ENCODE measurements at regions of chr15 and their contacts with region 1.

Region 1: GRCh38 chr15:63600616-63601025 is 3.4 kb downstream of the FBXL22 start:
- DNase-seq: peak; percentile 85 to 95 (median 90)
- ATAC-seq: peak; percentile 93
- H3K4me3 ChIP-seq: peak overlapping the region; percentile 95
- H3K4me3 Mint-ChIP-seq: peak overlapping the region; percentile 91 to 99 (median 94)
- H3K27ac ChIP-seq: peak overlapping the region; percentile 80
- H3K27ac Mint-ChIP-seq: peak overlapping the region; percentile 90 to 96 (median 93)
- H3K4me1 ChIP-seq: peaks cover 22 to 27% of the 10 kb centered on the region in 2 donors
- H3K4me1 Mint-ChIP-seq: peaks cover 39 to 70% (median 66%) of the 10 kb centered on the region in 7 donors
- H3K27me3 ChIP-seq: no peaks in the 10 kb centered on the region
- H3K27me3 Mint-ChIP-seq: no peaks in the 10 kb centered on the region

Region 2: DNA sequence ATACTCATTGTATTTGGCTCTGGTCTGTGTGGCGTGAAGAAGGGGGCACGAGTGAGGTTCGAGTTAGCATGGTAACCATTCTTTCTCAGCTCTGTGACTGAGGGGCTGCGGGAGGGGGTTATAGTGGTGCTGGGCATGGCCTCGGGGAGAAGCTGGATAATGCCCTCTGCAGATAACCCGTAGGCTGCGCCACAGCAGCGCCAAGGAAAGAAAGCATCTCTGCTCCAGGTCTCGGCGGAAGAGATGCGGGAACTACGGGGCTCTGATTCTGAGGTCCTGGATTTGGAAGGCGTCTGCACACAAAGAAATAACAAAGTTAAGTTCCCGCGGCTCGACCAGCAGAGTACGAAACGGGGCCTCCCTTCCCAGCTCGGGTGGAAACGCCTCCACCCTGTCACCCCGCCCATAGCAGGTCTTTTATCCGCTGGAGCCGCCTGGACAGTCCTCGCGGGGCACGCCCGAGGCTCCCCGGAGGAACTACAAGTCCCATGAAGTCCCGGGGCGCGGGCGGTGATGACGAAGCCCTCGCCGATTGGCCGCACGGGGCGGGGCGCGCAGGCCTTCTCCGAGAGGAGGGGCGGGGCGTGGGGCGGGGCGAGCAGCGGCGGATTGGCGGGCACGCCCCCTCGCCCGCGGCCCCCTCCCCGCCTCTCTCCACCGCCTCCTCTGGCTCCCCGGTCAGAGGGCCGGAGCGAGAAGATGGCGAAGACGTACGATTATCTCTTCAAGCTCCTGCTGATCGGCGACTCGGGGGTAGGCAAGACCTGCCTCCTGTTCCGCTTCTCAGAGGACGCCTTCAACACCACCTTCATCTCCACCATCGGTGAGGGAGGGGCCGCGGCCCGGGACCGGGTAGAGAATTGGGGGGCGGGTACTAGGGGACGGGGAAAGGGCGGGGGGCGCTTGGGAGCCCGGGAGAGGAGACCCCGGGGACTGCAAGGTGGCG is 411.4 kb before region 1 on chr15 and contains the start of gene RAB8B:
- CTCF ChIA-PET with region 1: no interaction called
- POLR2A ChIA-PET with region 1: no interaction called
- intact Hi-C with region 1: loop called in 1 of 2 experiments (anchors 5 kb)
- DNase-seq: peak; percentile 85 to 98 (median 93)
- ATAC-seq: peak; percentile 88
- H3K4me3 ChIP-seq: peak within 1 kb of the TSS; percentile 86
- H3K4me3 Mint-ChIP-seq: peak within 1 kb of the TSS; percentile 92 to 99 (median 97)
- H3K27ac ChIP-seq: peak within 1 kb of the TSS; percentile 99
- H3K27ac Mint-ChIP-seq: peak within 1 kb of the TSS; percentile 84 to 98 (median 95)
- H3K4me1 ChIP-seq: peaks cover 22 to 40% of the 10 kb centered on the region in 2 donors
- H3K4me1 Mint-ChIP-seq: peaks cover 41 to 54% (median 50%) of the 10 kb centered on the region in 7 donors
- H3K27me3 ChIP-seq: no peaks in the 10 kb centered on the region
- H3K27me3 Mint-ChIP-seq: peaks cover 0 to 3% (median 0%) of the 10 kb centered on the region in 5 donors
- total RNA-seq, gene RAB8B: 37.2 to 100 (median 71.3) TPM

Region 3: DNA sequence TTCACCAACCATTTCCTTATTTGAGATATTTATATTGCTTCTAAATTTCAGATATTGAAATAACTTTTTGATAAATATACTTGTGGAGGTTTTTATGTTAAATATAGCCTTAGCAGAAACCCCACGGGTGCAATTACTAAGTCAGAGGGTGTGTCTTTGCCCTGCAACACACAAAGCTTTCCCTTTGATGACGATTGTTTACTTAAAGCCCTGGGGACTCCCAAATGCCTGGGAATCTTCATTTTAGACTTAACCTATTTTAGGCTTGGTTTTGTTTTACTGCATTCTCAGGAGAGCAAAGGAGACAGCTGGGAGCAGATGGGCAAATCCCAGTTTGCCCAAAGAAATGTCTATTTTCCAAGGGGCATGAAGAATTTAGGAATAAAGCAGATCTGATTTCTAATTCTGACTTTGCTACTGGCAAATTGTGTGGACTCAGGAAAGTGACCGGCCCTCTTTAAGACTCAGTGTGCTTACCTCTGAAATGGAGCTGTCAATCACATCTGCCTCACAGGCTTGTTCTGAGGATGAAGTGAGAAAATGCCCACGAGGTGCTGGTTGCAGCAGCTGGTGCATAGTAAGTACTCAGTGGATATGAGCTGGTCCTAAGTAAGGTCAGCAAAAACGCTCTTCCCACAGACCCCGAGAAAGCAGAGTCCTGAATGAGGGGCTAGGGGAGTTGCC is 169.7 kb before region 1 on chr15:
- CTCF ChIA-PET with region 1: no interaction called
- POLR2A ChIA-PET with region 1: no interaction called
- intact Hi-C with region 1: no loop called
- DNase-seq: no peak
- ATAC-seq: no peak
- H3K4me3 ChIP-seq: no peak overlapping the region
- H3K4me3 Mint-ChIP-seq: no peak overlapping the region
- H3K27ac ChIP-seq: no peak overlapping the region
- H3K27ac Mint-ChIP-seq: no peak overlapping the region
- H3K4me1 ChIP-seq: no peaks in the 10 kb centered on the region
- H3K4me1 Mint-ChIP-seq: peaks cover 0 to 20% (median 11%) of the 10 kb centered on the region in 7 donors
- H3K27me3 ChIP-seq: no peaks in the 10 kb centered on the region
- H3K27me3 Mint-ChIP-seq: no peaks in the 10 kb centered on the region

Region 4: DNA sequence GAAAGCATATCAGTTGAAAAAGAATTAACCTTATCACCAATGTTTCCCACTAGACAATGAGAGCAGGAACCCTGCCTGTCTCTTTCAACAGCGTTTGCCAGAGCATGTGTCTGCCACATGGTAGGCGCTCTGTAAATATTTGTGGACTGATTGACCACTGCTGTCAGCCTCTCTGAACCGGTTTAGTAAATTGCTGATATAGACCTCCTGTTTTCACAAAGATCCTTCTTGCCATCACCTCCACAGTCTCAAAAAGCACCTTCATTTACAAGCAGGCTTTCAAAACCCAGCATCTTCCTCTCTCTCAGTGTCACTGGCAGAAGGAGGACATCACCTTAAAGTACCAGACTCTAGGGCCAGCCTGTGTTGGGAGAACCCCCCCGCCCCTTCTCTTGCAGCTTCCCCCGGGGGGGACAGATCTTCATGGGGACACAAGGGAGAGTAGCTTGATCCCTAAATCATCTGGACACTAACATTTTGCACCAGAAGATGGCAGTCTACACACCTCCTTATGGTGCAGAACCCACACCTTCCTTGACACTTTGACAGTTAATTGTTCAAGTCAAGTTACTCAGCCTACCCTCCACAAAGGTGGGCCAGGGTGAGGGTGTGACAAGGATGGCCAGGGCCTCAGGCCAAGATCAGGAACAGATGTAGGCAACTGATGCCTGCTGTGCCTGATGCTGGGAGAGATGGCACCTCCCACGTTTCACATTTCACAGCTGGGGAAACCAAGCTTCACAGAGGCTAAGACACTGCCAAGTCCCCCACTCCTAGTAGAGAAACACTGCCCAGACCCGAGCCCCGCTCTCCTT is 134.0 kb before region 1 on chr15:
- CTCF ChIA-PET with region 1: interaction called, 40 read pairs
- POLR2A ChIA-PET with region 1: interaction called, 7 read pairs
- intact Hi-C with region 1: loop called (anchors 1 kb)
- DNase-seq: peak in 8 of 9 donors; percentile 46 to 80 (median 74)
- ATAC-seq: peak; percentile 95
- H3K4me3 ChIP-seq: no peak overlapping the region
- H3K4me3 Mint-ChIP-seq: peak overlapping the region in 2 of 10 donors; percentile 5 to 6
- H3K27ac ChIP-seq: no peak overlapping the region
- H3K27ac Mint-ChIP-seq: peak overlapping the region; percentile 37 to 96 (median 82)
- H3K4me1 ChIP-seq: peaks cover 0 to 4% of the 10 kb centered on the region in 2 donors
- H3K4me1 Mint-ChIP-seq: peaks cover 12 to 43% (median 33%) of the 10 kb centered on the region in 7 donors
- H3K27me3 ChIP-seq: no peaks in the 10 kb centered on the region
- H3K27me3 Mint-ChIP-seq: peaks cover 0 to 18% (median 0%) of the 10 kb centered on the region in 5 donors

Region 5: DNA sequence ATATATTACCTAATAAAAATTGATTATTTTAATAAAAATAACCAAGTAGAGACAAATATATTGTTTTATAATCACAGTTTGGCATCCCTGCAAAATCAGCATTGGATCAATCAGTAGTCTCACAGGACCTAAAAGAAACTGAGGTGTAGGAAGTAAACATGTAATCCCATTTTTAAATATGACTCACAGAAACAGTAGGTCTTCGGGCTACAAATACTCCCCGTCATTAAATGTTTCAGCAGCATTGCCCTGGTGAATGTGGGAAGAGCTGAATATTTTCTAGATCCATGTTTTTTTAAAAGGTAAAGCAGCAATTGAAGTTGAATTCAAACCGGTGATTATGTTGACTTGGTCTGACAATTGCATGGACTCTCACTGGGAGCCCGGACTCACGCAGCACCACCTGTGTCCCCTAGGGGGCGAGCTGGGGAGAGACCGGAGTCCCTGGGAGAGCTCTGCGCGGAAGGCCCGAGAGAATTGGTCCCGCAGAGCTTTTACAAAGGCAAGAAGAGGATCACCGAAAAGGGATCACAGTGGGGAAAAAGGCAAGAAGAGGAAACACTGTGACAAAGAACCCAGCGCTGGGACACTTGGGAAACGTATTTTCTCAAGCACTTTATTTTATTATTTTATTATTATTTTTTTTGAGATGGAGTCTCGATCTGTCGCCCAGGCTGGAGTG is 113.4 kb before region 1 on chr15:
- CTCF ChIA-PET with region 1: interaction called, 4 read pairs
- POLR2A ChIA-PET with region 1: interaction called, 6 read pairs
- intact Hi-C with region 1: loop called in 1 of 2 experiments (anchors 5 kb)
- DNase-seq: peak; percentile 68 to 89 (median 83)
- ATAC-seq: peak; percentile 86
- H3K4me3 ChIP-seq: no peak overlapping the region
- H3K4me3 Mint-ChIP-seq: peak overlapping the region; percentile 50 to 84 (median 59)
- H3K27ac ChIP-seq: peak overlapping the region; percentile 10
- H3K27ac Mint-ChIP-seq: peak overlapping the region; percentile 47 to 99 (median 82)
- H3K4me1 ChIP-seq: peaks cover 30 to 55% of the 10 kb centered on the region in 2 donors
- H3K4me1 Mint-ChIP-seq: peaks cover 40 to 88% (median 71%) of the 10 kb centered on the region in 7 donors
- H3K27me3 ChIP-seq: no peaks in the 10 kb centered on the region
- H3K27me3 Mint-ChIP-seq: no peaks in the 10 kb centered on the region

Region 6: GRCh38 chr15:63668601-63669000 is 68.0 kb after region 1 on chr15:
- CTCF ChIA-PET with region 1: no interaction called
- POLR2A ChIA-PET with region 1: interaction called, 4 read pairs
- intact Hi-C with region 1: loop called in 1 of 2 experiments (anchors 1 kb)
- DNase-seq: peak in 6 of 9 donors; percentile 22 to 63 (median 52)
- ATAC-seq: peak; percentile 83
- H3K4me3 ChIP-seq: peak overlapping the region; percentile 36
- H3K4me3 Mint-ChIP-seq: peak overlapping the region; percentile 31 to 82 (median 78)
- H3K27ac ChIP-seq: peak overlapping the region; percentile 52
- H3K27ac Mint-ChIP-seq: peak overlapping the region; percentile 89 to 96 (median 92)
- H3K4me1 ChIP-seq: peaks cover 17 to 25% of the 10 kb centered on the region in 2 donors
- H3K4me1 Mint-ChIP-seq: peaks cover 22 to 56% (median 50%) of the 10 kb centered on the region in 7 donors
- H3K27me3 ChIP-seq: no peaks in the 10 kb centered on the region
- H3K27me3 Mint-ChIP-seq: no peaks in the 10 kb centered on the region

Measured in naive thymus-derived CD4-positive, alpha-beta T cell (primary cell).